Endothelial cell of umbilical vein (primary cell): ENCODE measurements at regions of chr1 and their contacts with region 1.

Region 1: DNA sequence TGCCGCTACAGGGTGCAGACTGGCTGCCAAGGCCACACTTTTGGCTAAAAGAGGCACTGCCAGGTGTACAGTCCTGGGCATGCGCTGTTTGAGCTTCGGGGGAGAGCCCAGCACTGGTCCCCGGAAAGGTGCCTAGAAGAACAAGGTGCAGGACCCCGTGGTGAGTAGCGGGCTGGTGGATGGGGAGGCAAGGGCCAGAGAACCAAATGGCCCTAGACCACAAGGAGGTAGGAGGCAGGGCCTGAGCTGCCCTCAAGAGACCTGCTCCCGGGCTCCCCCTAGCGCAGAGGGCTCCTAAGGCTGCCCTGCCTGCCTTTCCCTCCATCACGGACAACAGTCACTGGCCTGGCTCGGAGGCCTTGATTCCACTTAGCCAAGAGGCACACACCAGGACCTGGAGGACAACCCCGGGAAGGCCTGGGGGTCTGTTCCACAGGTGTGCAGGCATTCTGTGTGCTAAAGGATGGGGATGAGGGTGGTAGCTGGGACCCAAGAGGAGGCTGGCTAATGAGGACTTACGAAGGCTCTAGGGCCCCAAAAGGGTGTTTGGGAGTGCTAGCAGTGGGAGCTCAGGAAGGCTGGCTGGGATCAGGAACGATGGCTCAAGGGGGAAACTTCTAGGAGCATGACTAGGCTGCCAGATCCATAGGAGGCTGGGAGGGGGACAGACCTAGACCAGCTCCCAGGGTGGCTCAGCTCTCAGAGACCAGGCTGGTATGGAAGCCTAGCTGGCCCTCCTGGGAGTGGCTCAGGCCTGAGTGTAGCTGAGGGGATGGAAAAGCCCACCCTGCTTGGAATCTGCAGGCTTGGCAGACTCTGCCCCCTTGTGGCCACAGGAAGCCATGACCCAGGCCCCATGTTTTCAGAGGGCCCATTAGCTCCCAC is 742 bp downstream of the ARTN start:
- DNase-seq: peak; percentile 42
- H3K4me3 ChIP-seq: no peak overlapping the region
- H3K27ac ChIP-seq: no peak overlapping the region
- H3K4me1 ChIP-seq: peaks cover 5% of the 10 kb centered on the region
- H3K27me3 ChIP-seq: peaks cover 3 to 9% of the 10 kb centered on the region in 2 experiments
- CTCF ChIP-seq: peak; percentile 63 to 91
- POLR2A ChIP-seq: no peak

Region 2: DNA sequence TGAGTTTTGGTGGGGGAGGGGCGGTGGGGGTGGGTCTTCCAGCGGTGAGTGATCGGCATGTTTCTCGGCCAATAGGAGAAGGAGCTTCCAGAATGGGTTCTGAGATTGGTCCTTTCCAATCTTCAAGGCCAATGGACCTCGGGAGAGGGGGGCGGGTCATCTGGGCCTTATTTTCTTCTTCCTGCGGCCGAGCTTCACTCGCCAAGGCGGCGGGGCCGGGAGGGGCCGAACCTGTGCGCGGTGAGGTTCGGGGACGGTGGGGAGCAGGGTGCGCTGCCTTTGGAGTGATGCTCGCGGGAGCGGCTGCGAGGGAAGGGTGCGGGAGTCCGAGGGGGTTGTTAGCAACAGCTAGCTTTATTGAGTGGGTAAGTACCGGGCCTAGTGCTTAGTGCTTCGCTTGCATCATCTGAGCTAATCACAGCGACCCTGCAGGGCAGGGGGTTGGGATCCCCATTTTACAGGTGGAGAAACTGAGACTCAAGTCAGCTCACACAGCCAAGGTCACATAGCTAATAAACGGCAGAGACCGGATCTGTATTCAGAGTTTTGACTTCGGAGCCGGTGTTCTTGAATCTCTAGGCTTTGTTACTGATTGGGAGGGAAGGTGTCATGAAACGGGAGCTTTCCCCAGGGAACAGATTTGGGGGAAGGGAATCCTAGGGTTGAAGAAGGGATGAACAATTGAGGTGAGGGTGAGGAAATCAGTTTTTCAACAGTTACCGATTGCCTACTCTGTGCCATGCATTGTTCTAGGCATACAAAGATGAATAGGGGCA is 283.8 kb before region 1 on chr1:
- CTCF ChIA-PET with region 1: interaction called, 7 read pairs
- POLR2A ChIA-PET with region 1: no interaction called
- dilution Hi-C with region 1: no loop called
- intact Hi-C with region 1: loop called (anchors 5 kb)
- DNase-seq: peak; percentile 94
- H3K4me3 ChIP-seq: peak overlapping the region; percentile 60 to 95 (median 65)
- H3K27ac ChIP-seq: peak overlapping the region; percentile 63
- H3K4me1 ChIP-seq: peaks cover 16% of the 10 kb centered on the region
- H3K27me3 ChIP-seq: peaks cover under 1 to 1% of the 10 kb centered on the region in 2 experiments
- CTCF ChIP-seq: no peak
- POLR2A ChIP-seq: peak; percentile 99

Region 3: GRCh38 chr1:43706598-43707495 is 227.5 kb before region 1 on chr1:
- CTCF ChIA-PET with region 1: interaction called, 24 read pairs
- POLR2A ChIA-PET with region 1: no interaction called
- dilution Hi-C with region 1: no loop called
- intact Hi-C with region 1: loop called (anchors 1 kb)
- DNase-seq: peak; percentile 92
- H3K4me3 ChIP-seq: peak overlapping the region in 2 of 3 experiments; percentile 36 to 56
- H3K27ac ChIP-seq: no peak overlapping the region
- H3K4me1 ChIP-seq: peaks cover 36% of the 10 kb centered on the region
- H3K27me3 ChIP-seq: no peaks in the 10 kb centered on the region
- CTCF ChIP-seq: no peak
- POLR2A ChIP-seq: peak; percentile 93

Region 4: DNA sequence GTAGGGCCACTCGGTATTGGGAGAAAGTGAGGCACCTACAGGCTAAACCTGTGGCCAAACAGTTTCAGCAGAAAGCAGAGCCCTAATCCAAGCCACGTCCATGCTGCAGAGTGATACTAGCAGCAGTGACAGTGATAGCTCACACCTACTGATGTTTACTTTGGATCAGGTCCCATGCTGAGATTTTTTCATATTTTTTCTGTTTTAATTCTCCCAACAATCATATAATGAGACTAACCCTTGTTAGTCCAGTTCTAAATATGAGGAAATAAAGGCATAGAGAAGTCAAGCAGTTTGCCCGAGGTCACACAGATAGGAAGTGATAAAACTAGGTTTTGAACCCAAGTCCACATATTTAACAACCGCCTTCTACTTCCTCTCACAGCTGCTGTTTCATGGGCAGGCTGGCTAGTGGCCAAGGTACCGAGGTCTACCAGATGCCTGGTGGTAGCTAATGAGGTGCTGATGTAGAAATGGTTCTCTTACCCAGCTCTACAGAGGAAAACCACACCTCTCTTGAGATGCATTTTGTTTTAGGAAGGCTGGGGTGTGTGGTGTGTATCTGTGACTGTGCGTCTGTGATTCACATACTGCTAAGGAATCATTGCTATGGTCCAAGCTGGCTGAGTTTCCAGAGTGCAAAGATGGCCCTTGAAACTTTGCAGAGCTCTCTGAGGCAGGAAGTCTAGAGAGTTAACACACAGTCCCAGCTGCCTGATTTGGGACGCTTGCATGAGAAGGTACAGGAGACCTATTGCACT is 81.0 kb before region 1 on chr1:
- CTCF ChIA-PET with region 1: interaction called, 8 read pairs
- POLR2A ChIA-PET with region 1: no interaction called
- dilution Hi-C with region 1: no loop called
- intact Hi-C with region 1: loop called (anchors 5 kb)
- DNase-seq: peak; percentile 83
- H3K4me3 ChIP-seq: no peak overlapping the region
- H3K27ac ChIP-seq: no peak overlapping the region
- H3K4me1 ChIP-seq: peaks cover 12% of the 10 kb centered on the region
- H3K27me3 ChIP-seq: peaks cover 0 to 3% of the 10 kb centered on the region in 2 experiments
- CTCF ChIP-seq: no peak
- POLR2A ChIP-seq: peak; percentile 34

Region 5: GRCh38 chr1:43890815-43891214 is 43.5 kb before region 1 on chr1:
- CTCF ChIA-PET with region 1: interaction called, 15 read pairs
- POLR2A ChIA-PET with region 1: no interaction called
- dilution Hi-C with region 1: no loop called
- intact Hi-C with region 1: no loop called
- DNase-seq: peak; percentile 66
- H3K4me3 ChIP-seq: no peak overlapping the region
- H3K27ac ChIP-seq: no peak overlapping the region
- H3K4me1 ChIP-seq: no peaks in the 10 kb centered on the region
- H3K27me3 ChIP-seq: no peaks in the 10 kb centered on the region
- CTCF ChIP-seq: no peak
- POLR2A ChIP-seq: no peak

Region 6: DNA sequence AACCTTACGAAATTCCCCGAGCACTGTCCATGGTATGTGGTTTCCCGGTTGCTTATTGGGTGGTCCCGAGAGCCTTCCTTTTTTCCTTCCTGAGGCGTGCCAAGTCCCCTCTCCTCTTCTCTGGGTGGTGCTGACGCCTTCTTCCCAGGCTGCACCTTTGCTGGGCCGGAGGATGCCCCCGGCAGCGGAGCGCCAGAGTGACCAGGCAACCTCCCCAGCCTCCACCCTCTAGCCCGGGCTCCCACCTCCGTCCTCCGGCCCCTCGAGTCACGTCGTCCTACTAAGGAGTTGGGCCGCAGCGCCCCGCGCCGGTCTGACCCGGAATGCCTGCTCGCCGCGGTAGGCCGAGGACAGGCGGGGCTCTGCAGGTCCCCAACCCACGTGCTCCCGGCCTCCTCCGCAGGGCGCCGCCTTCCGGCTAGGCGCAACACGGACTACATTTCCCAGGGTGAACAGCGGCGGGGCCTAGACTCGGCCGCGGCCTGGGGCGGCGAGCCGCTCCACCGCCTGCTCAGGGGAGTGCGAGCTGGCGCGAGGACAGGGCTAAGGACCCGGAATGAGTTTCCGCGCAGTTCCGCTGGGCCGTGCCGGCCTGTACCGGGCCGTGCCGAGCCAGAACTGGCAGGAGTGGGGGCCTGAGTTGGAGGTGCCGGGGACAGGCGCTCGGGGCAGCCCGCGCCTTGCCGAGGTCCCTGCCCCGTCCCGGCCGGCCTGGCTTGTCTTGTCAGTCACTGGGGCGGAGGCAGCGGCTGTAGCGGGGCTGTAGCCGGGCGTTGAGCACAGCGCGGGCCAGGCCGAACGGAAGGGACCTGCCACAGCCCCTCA is 12.1 kb after region 1 on chr1 and contains the start of gene IPO13:
- CTCF ChIA-PET with region 1: interaction called, 93 read pairs
- POLR2A ChIA-PET with region 1: interaction called, 4 read pairs
- dilution Hi-C with region 1: no loop called
- intact Hi-C with region 1: no loop called
- DNase-seq: peak; percentile 96
- H3K4me3 ChIP-seq: peak within 1 kb of the TSS; percentile 64 to 76 (median 67)
- H3K27ac ChIP-seq: peak within 1 kb of the TSS; percentile 94
- H3K4me1 ChIP-seq: peaks cover 20% of the 10 kb centered on the region
- H3K27me3 ChIP-seq: no peaks in the 10 kb centered on the region
- CTCF ChIP-seq: peak; percentile 65 to 70
- POLR2A ChIP-seq: peak; percentile 86
- total RNA-seq, gene IPO13: 25.8 and 29.3 TPM in 2 replicates

Region 7: DNA sequence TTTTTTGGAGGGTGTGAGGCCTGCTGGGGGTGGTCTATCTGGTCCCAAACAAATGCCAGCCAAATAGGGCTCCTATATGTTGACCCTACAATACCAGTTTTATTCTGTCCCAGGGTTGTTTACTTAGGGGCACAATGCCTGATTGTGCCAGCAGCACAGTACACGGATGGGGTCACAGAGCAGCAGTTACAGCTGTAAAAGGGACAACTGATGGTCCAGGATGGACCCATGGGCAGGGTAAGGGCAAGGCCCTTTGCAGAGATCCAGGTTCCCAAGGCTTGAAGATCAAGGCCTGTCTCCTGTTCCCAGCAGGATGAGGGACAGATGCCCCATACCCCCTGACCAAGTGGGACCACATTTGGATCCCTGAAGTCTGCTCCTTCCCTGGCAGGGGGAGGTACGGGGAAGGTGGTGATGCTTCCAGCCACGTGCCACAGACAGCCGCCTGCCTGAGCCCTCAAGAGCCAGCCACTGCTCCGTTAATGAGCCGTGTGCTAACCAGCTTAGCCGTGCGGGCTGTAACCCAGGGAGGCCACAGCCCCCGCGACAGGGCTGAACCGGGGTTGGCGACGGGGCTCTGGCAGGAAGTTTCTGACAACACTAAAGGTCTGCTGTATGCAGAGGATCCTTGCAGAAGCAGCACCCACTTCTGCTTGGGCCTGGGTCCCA is 78.7 kb after region 1 on chr1:
- CTCF ChIA-PET with region 1: no interaction called
- POLR2A ChIA-PET with region 1: no interaction called
- dilution Hi-C with region 1: no loop called
- intact Hi-C with region 1: no loop called
- DNase-seq: no peak
- H3K4me3 ChIP-seq: no peak overlapping the region
- H3K27ac ChIP-seq: no peak overlapping the region
- H3K4me1 ChIP-seq: no peaks in the 10 kb centered on the region
- H3K27me3 ChIP-seq: peaks cover 0 to 4% of the 10 kb centered on the region in 2 experiments
- CTCF ChIP-seq: no peak
- POLR2A ChIP-seq: no peak